ENCODE measurements at regions of chr18 and their contacts with region 1.

Region 1: GRCh38 chr18:23131693-23132319 is 3.5 kb upstream of the CABLES1 start:
- DNase-seq: no peak
- H3K4me3 ChIP-seq: no peak overlapping the region
- H3K27ac ChIP-seq: no peak overlapping the region
- H3K4me1 ChIP-seq: peaks cover 1 to 13% (median 11%) of the 10 kb centered on the region in 4 experiments; a peak in 6 of 7 replicates
- H3K27me3 ChIP-seq: peaks cover 0 to 8% (median 1%) of the 10 kb centered on the region in 4 experiments; a peak in 3 of 7 replicates
- CTCF ChIP-seq: peak; percentile 32 to 82 (median 69)
- EP300 ChIP-seq: no peak
- POLR2A ChIP-seq: no peak
- RAD21 ChIP-seq: peak; percentile 77 to 83

Region 2: GRCh38 chr18:23085066-23085465 is 46.7 kb before region 1 on chr18:
- CTCF ChIA-PET with region 1: no interaction called
- POLR2A ChIA-PET with region 1: no interaction called
- DNase-seq: no peak
- H3K4me3 ChIP-seq: no peak overlapping the region
- H3K27ac ChIP-seq: no peak overlapping the region
- H3K4me1 ChIP-seq: no peaks in the 10 kb centered on the region
- H3K27me3 ChIP-seq: no peaks in the 10 kb centered on the region
- CTCF ChIP-seq: no peak
- EP300 ChIP-seq: no peak
- POLR2A ChIP-seq: no peak
- RAD21 ChIP-seq: no peak

Region 3: DNA sequence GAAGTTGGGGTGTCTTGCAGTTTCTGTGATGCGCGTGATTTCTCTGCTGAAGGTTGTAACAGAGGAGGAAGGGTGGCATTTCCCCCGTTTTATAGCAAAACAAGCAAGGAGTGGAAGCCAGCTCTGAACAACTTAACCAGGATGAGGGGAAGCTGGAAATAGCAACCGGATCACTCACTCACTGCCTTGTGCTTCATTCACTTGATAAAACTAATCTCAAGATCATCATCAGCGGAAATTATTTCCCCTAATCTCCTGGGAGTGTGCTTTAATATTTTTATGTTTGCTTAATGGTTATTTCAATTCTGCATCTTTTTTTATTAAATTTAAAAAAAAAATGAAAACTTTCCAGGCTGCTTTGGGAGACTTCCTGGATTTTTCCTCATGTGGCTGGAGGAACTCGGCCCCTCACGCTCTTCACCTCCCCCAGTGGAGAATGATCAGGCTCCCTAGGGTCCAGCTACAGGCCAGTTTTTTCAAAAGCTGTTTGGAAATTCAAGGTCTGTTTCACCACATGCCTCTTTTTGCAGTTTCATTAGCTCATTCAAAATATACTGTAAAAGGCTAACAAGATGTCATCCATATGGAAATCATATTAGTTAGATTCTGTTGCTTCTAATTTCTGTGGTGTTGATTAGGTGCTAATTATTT is 35.2 kb after region 1 on chr18:
- CTCF ChIA-PET with region 1: interaction called, 8 read pairs
- POLR2A ChIA-PET with region 1: interaction called, 46 read pairs
- DNase-seq: no peak
- H3K4me3 ChIP-seq: no peak overlapping the region; a peak in 1 of 8 replicates
- H3K27ac ChIP-seq: no peak overlapping the region
- H3K4me1 ChIP-seq: peaks cover 18 to 38% (median 33%) of the 10 kb centered on the region in 4 experiments
- H3K27me3 ChIP-seq: no peaks in the 10 kb centered on the region
- CTCF ChIP-seq: no peak
- EP300 ChIP-seq: no peak
- POLR2A ChIP-seq: no peak
- RAD21 ChIP-seq: no peak

Region 4: DNA sequence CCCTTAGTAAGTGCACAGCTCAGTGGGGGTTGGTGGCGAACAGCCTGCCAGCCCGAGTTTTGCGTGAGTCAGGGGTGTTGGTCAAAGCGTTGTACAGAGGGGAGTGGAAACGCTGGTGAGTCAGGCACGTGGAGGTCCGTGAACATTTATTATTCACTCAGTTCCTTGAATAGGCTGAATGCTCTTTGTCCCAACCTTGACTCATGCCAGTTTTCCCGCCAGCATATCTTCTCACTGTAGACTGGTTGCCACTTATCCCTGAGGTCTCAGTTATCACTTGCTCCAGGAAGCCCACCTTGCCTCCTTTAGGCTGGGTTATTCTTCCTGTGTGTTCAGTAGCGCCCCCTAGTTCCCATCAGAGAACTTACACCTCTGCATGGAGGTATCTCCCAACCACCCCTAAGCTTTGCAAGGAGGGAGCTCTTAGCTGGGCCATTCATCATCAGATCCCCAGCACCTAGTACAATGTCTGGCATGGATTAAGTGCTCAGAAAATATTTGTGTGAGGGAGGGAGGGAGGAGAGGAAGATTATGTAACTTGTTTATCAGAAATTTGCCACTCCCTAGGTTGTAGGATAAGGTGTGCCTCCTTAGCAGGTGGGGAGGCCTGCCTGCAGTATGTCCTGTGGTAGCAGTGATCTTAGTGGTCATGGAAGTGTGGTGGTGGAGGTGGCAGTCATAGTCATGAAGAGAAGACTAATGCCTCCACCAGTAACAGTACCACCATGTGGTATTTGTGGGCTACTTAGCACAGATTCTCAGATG is 75.6 kb after region 1 on chr18:
- CTCF ChIA-PET with region 1: interaction called, 27 read pairs
- POLR2A ChIA-PET with region 1: interaction called, 3 read pairs
- DNase-seq: peak in 1 of 2 experiments; percentile 55
- H3K4me3 ChIP-seq: no peak overlapping the region
- H3K27ac ChIP-seq: no peak overlapping the region
- H3K4me1 ChIP-seq: no peaks in the 10 kb centered on the region
- H3K27me3 ChIP-seq: no peaks in the 10 kb centered on the region
- CTCF ChIP-seq: peak; percentile 60 to 93 (median 78)
- EP300 ChIP-seq: no peak
- POLR2A ChIP-seq: no peak
- RAD21 ChIP-seq: peak; percentile 70 to 84

Region 5: GRCh38 chr18:23237524-23238151 is 105.8 kb after region 1 on chr18:
- CTCF ChIA-PET with region 1: interaction called, 11 read pairs
- POLR2A ChIA-PET with region 1: interaction called, 3 read pairs
- DNase-seq: no peak
- H3K4me3 ChIP-seq: no peak overlapping the region
- H3K27ac ChIP-seq: no peak overlapping the region
- H3K4me1 ChIP-seq: peaks cover 0 to 10% (median 5%) of the 10 kb centered on the region in 4 experiments; a peak in 5 of 7 replicates
- H3K27me3 ChIP-seq: no peaks in the 10 kb centered on the region
- CTCF ChIP-seq: peak; percentile 10 to 37 (median 13)
- EP300 ChIP-seq: no peak
- POLR2A ChIP-seq: no peak
- RAD21 ChIP-seq: peak; percentile 42 to 60; a peak in 3 of 4 replicates

Region 6: GRCh38 chr18:23412351-23412964 is 280.7 kb after region 1 on chr18:
- CTCF ChIA-PET with region 1: interaction called, 20 read pairs
- POLR2A ChIA-PET with region 1: no interaction called
- DNase-seq: no peak
- H3K4me3 ChIP-seq: no peak overlapping the region
- H3K27ac ChIP-seq: no peak overlapping the region
- H3K4me1 ChIP-seq: no peaks in the 10 kb centered on the region
- H3K27me3 ChIP-seq: no peaks in the 10 kb centered on the region
- CTCF ChIP-seq: no peak
- EP300 ChIP-seq: no peak
- POLR2A ChIP-seq: no peak
- RAD21 ChIP-seq: no peak